Posterior cingulate gyrus (tissue), 11 donors: ENCODE measurements at regions of chr1 and their contacts with region 1.

Region 1: GRCh38 chr1:100132566-100133477 is at the starts of genes SASS6 and TRMT13:
- DNase-seq: peak; percentile 95 to 99 (median 98)

Region 2: GRCh38 chr1:99707535-99708142 is 425.2 kb before region 1 on chr1:
- intact Hi-C with region 1: no loop called
- DNase-seq: peak in 8 of 10 donors; percentile 41 to 92 (median 73)

Region 3: DNA sequence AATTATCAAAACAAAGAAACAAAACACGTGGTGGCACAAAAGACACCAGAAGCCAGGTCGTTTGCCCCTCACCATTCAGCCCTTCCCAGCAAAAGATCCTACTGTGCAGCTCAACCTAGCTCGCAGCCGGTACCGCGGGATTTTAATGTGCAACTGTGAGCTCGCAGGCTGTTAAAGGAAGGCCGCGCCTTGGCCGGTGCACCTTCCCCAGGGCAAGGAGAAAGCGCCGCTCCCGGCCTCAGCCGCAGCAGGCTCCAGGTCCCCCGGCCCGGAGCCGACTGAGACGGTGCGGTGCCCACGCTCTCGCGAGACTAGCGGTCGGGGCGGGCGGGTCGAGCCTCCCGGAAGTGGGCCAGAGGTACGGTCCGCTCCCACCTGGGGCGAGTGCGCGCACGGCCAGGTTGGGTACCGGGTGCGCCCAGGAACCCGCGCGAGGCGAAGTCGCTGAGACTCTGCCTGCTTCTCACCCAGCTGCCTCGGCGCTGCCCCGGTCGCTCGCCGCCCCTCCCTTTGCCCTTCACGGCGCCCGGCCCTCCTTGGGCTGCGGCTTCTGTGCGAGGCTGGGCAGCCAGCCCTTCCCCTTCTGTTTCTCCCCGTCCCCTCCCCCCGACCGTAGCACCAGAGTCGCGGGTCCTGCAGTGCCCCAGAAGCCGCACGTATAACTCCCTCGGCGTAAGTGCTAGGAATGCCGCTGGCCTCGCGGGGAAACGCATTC is 282.9 kb before region 1 on chr1 and contains the start of gene AGL:
- intact Hi-C with region 1: loop called (anchors 10 kb)
- DNase-seq: peak; percentile 67 to 97 (median 80)

Region 4: DNA sequence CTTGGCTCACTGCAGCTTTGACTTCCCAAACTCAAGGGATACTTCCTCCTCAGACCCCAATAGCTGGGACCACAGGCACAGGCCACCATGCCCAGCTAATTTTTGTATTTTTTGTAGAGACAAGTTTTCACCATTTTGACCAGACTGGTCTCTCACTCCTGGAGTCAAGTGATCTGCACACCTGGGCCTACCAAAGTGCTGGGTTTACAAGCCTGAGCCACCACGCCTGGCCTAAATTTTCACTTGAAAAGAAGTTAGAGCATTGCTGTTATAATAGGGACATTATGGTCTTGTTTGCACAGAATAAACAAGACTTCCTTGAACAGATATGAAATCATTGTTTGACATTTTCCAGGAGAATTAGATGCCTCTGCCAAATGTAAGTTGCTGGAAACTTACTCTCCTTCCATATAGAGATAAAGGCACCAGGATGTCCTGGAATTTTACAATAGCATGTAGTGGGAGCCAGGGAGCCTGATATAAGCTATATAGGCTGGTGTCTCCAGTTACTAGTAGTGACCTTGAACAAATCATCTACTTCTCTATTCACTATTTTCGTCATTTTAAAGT is 146.1 kb before region 1 on chr1:
- intact Hi-C with region 1: no loop called
- DNase-seq: no peak

Region 5: DNA sequence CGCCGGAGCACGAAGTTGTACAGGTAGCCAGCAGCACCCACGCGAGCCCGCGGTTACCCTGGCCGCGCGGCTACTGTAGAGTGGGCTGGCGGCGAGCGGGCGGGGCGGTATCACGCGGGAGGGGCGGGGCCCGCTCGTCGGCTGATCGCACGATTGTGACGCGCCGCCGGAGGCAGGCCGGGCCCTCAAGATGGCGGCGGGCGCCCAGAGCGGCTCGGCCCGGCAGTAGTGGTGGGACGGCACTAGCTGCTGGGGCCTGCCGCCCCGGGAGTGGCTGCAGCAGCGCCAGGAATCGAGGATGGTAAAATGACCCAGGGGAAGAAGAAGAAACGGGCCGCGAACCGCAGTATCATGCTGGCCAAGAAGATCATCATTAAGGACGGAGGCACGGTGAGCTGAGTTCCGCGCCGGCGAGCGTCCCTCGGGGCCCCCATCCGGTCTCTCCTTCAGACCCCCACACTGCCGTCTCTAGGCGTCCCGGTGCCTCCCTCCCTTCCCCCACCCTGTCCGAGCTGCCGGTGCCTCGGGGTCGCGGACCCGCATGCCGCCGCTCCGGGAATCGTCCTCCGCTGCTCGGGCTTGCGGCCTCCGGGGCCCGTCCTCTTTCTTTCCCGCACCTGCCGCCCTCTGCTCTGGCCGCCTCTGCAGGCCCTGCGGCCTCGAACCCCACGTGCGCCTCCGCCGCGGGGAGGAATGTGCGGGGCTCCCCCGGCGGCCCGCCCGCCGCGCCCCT is 94.7 kb before region 1 on chr1:
- intact Hi-C with region 1: loop called (anchors 2 kb)
- DNase-seq: peak; percentile 80 to 99 (median 90)

Region 6: DNA sequence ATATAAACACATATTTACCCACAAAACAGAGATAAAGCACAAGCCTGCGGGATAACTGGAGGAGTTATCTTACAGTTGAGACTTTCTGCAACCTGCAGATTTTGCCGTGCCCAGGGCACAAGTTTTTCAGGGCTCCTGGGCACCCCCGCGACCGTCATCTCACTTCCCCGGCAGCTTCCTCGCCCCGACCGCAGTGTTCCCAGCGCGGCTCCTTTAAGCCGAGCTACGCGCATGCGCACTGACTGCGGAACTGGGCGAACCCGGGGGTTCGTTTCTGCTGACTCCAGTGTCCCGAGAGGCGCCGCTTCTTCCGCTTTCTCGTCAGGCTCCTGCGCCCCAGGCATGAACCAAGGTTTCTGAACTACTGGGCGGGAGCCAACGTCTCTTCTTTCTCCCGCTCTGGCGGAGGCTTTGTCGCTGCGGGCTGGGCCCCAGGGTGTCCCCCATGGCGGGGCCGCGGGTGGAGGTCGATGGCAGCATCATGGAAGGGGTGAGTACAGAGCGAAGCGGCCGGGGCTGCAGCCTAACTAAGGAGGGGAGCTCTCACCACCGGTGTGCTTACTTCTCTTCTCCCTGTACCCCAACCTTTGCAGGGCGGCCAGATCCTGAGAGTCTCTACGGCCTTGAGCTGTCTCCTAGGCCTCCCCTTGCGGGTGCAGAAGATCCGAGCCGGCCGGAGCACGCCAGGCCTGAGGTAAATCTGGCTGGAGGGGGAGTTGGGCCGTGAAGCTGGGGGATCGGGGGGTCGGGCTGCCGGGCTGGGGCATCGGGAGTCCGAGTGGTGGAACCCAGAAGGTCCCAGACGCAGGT is 133.3 kb after region 1 on chr1 and contains the start of gene RTCA:
- intact Hi-C with region 1: loop called (anchors 5 kb)
- DNase-seq: peak; percentile 93 to 99 (median 96)

Region 7: DNA sequence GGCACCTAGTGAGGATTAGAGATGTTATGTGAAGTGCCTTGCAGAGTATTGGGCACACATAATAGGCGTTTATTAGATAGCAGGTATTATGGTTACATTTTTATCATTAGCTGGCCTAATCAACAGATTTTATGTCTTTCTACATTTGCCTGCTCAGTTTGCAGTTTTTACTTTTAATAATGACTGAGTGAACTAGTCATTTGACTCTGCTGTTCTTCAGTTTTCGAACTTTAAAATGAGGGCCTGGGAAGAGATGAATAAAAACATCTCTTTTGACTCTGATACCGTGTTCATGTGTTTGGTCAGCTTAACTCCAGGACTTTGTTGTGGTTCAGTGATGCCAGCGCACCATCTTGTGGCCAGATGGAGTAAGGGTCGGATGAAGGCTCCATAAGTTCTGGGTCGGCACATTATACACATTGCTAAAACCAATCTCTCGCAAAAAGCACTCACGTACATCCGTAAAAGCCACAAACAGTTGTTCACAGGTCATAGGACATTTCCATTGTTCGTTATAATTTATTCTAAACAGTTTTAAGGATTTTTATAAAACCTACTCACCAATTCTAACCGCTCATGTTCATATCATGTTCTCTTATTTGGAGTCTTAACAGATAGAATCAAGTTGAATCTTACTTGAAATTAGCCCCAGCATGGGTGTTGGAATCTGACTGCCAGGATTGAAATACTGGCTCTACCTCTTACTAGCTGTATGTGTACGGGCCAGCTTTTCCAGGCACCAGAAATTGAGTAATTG is 326.7 kb after region 1 on chr1:
- intact Hi-C with region 1: loop called (anchors 10 kb)
- DNase-seq: peak; percentile 45 to 94 (median 74)